ENCODE measurements at regions of chr3 and their contacts with region 1.

Region 1: DNA sequence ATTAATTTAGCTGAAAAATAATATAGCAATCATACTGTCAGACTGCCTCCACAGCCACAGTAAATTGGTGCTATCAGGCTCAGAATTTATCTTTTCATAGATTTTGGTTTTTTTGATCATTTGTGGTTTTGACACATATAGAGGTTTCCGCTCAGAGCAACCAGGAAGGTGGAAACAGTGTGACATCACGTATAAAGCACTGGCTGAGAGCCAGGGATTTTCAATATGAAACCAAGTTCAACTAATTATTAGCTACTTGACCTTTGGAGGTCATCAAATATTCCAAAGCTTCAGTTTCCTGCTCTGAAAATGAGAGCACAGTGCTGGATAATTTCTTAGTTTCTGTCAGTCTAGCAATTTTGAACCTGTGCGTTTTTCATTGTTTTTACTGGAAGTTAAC is 433.8 kb upstream of the SUCLG2 start:
- DNase-seq: peak in 8 of 9 experiments; percentile 21 to 88 (median 58)
- ATAC-seq: peak; percentile 85
- H3K4me3 ChIP-seq: peak overlapping the region in 1 of 2 experiments; percentile 33
- H3K4me3 Mint-ChIP-seq: peak overlapping the region; percentile 45
- H3K27ac ChIP-seq: no peak overlapping the region
- H3K27ac Mint-ChIP-seq: peak overlapping the region; percentile 25
- H3K4me1 ChIP-seq: peaks cover 47% of the 10 kb centered on the region
- H3K4me1 Mint-ChIP-seq: peaks cover 65% of the 10 kb centered on the region
- H3K27me3 ChIP-seq: no peaks in the 10 kb centered on the region
- H3K27me3 Mint-ChIP-seq: peaks cover 2% of the 10 kb centered on the region
- CTCF ChIP-seq: no peak

Region 2: GRCh38 chr3:66220602-66221377 is 1867.4 kb before region 1 on chr3 and contains the start of gene SLC25A26:
- CTCF ChIA-PET with region 1: no interaction called
- POLR2A ChIA-PET with region 1: no interaction called
- intact Hi-C with region 1: loop called in 1 of 2 experiments (anchors 10 kb)
- DNase-seq: peak; percentile 94 to 99 (median 97)
- ATAC-seq: peak; percentile 98
- H3K4me3 ChIP-seq: peak within 1 kb of the TSS; percentile 73 to 91
- H3K4me3 Mint-ChIP-seq: peak within 1 kb of the TSS; percentile 90
- H3K27ac ChIP-seq: peak within 1 kb of the TSS; percentile 58 to 82
- H3K27ac Mint-ChIP-seq: peak within 1 kb of the TSS; percentile 90
- H3K4me1 ChIP-seq: peaks cover 14% of the 10 kb centered on the region
- H3K4me1 Mint-ChIP-seq: peaks cover 35% of the 10 kb centered on the region
- H3K27me3 ChIP-seq: no peaks in the 10 kb centered on the region
- H3K27me3 Mint-ChIP-seq: peaks cover 3% of the 10 kb centered on the region
- CTCF ChIP-seq: no peak
- total RNA-seq, gene SLC25A26: 32.0 to 37.4 TPM

Region 3: GRCh38 chr3:67593761-67594244 is 494.4 kb before region 1 on chr3:
- CTCF ChIA-PET with region 1: no interaction called
- POLR2A ChIA-PET with region 1: no interaction called
- intact Hi-C with region 1: no loop called
- DNase-seq: peak in 2 of 9 experiments; percentile 34 to 49
- ATAC-seq: no peak
- H3K4me3 ChIP-seq: no peak overlapping the region
- H3K4me3 Mint-ChIP-seq: no peak overlapping the region
- H3K27ac ChIP-seq: no peak overlapping the region
- H3K27ac Mint-ChIP-seq: no peak overlapping the region
- H3K4me1 ChIP-seq: peaks cover 29% of the 10 kb centered on the region
- H3K4me1 Mint-ChIP-seq: peaks cover 78% of the 10 kb centered on the region
- H3K27me3 ChIP-seq: no peaks in the 10 kb centered on the region
- H3K27me3 Mint-ChIP-seq: no peaks in the 10 kb centered on the region
- CTCF ChIP-seq: no peak

Region 4: GRCh38 chr3:67947808-67948508 is 140.3 kb before region 1 on chr3:
- CTCF ChIA-PET with region 1: interaction called, 3 read pairs
- POLR2A ChIA-PET with region 1: no interaction called
- intact Hi-C with region 1: loop called (anchors 1 to 10 kb)
- DNase-seq: peak; percentile 50 to 89 (median 77)
- ATAC-seq: peak; percentile 95
- H3K4me3 ChIP-seq: peak overlapping the region; percentile 42 to 45
- H3K4me3 Mint-ChIP-seq: peak overlapping the region; percentile 84
- H3K27ac ChIP-seq: peak overlapping the region; percentile 2 to 32
- H3K27ac Mint-ChIP-seq: peak overlapping the region; percentile 92
- H3K4me1 ChIP-seq: peaks cover 20% of the 10 kb centered on the region
- H3K4me1 Mint-ChIP-seq: peaks cover 39% of the 10 kb centered on the region
- H3K27me3 ChIP-seq: no peaks in the 10 kb centered on the region
- H3K27me3 Mint-ChIP-seq: no peaks in the 10 kb centered on the region
- CTCF ChIP-seq: peak; percentile 18

Region 5: GRCh38 chr3:67986706-67987105 is 101.5 kb before region 1 on chr3:
- CTCF ChIA-PET with region 1: no interaction called
- POLR2A ChIA-PET with region 1: no interaction called
- intact Hi-C with region 1: no loop called
- DNase-seq: no peak
- ATAC-seq: no peak
- H3K4me3 ChIP-seq: no peak overlapping the region
- H3K4me3 Mint-ChIP-seq: no peak overlapping the region
- H3K27ac ChIP-seq: no peak overlapping the region
- H3K27ac Mint-ChIP-seq: no peak overlapping the region
- H3K4me1 ChIP-seq: no peaks in the 10 kb centered on the region
- H3K4me1 Mint-ChIP-seq: peaks cover 3% of the 10 kb centered on the region
- H3K27me3 ChIP-seq: no peaks in the 10 kb centered on the region
- H3K27me3 Mint-ChIP-seq: no peaks in the 10 kb centered on the region
- CTCF ChIP-seq: no peak

Region 6: GRCh38 chr3:68007621-68008226 is 80.5 kb before region 1 on chr3:
- CTCF ChIA-PET with region 1: no interaction called
- POLR2A ChIA-PET with region 1: no interaction called
- intact Hi-C with region 1: loop called (anchors 1 to 5 kb)
- DNase-seq: peak; percentile 3 to 69 (median 41)
- ATAC-seq: peak; percentile 79
- H3K4me3 ChIP-seq: peak overlapping the region; percentile 46 to 60
- H3K4me3 Mint-ChIP-seq: peak overlapping the region; percentile 90
- H3K27ac ChIP-seq: no peak overlapping the region
- H3K27ac Mint-ChIP-seq: peak overlapping the region; percentile 75
- H3K4me1 ChIP-seq: peaks cover 16% of the 10 kb centered on the region
- H3K4me1 Mint-ChIP-seq: peaks cover 19% of the 10 kb centered on the region
- H3K27me3 ChIP-seq: no peaks in the 10 kb centered on the region
- H3K27me3 Mint-ChIP-seq: peaks cover 32% of the 10 kb centered on the region
- CTCF ChIP-seq: peak; percentile 17

Region 7: GRCh38 chr3:68057637-68058320 is 30.4 kb before region 1 on chr3:
- CTCF ChIA-PET with region 1: no interaction called
- POLR2A ChIA-PET with region 1: interaction called, 5 read pairs
- intact Hi-C with region 1: loop called (anchors 1 to 2 kb)
- DNase-seq: peak; percentile 33 to 91 (median 66)
- ATAC-seq: peak; percentile 98
- H3K4me3 ChIP-seq: peak overlapping the region in 1 of 2 experiments; percentile 38
- H3K4me3 Mint-ChIP-seq: peak overlapping the region; percentile 59
- H3K27ac ChIP-seq: peak overlapping the region; percentile 6 to 44
- H3K27ac Mint-ChIP-seq: peak overlapping the region; percentile 79
- H3K4me1 ChIP-seq: peaks cover 59% of the 10 kb centered on the region
- H3K4me1 Mint-ChIP-seq: peaks cover 75% of the 10 kb centered on the region
- H3K27me3 ChIP-seq: no peaks in the 10 kb centered on the region
- H3K27me3 Mint-ChIP-seq: no peaks in the 10 kb centered on the region
- CTCF ChIP-seq: no peak